ENCODE measurements at regions of chr5 and their contacts with region 1.

Region 1: DNA sequence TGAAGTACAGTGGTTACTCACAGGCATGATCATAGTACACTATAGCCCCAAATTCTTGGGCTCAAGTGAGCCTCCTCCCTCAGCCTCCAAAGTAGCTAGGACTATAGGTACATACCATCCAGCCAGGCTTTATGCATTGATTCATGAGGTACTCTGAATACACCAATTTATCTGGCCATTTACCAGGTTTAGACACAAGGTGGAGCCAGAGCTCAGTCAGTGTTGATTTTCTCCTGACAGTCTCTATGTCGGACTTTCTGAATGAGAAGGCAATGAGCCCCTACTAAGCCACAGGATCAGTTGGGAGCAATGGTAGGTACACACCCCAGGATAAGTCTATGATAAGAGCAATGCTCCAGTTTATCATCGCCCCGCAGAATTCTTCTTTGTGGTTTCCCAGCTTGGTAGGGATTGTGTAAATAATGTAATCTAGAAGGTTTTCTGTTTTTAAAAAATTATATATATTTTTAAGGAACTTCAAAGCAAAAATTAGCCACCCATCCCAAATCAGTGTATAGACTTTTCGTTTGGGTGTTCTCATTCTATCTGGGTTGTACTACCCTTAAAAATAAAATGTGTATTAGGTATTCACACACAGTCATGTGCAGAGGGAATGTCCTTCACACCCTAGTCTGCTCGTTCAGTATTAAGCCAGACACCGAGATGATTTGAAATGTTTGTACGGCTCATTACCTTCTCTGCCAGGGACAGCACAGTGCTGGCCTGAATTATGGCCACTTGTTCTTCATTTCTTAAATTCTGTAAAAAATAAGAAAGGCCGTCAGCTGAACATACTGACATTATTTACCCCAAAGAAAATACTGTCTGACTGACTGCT is 118.4 kb upstream of the DPYSL3 start:
- DNase-seq: no peak
- ATAC-seq: peak; percentile 79 to 85
- H3K4me3 ChIP-seq: no peak overlapping the region
- H3K27ac ChIP-seq: no peak overlapping the region
- H3K4me1 ChIP-seq: no peaks in the 10 kb centered on the region
- H3K27me3 ChIP-seq: no peaks in the 10 kb centered on the region

Region 2: GRCh38 chr5:147822686-147823491 is 194.6 kb after region 1 on chr5:
- intact Hi-C with region 1: loop called (anchors 2 to 5 kb)
- DNase-seq: peak in 2 of 3 donors; percentile 28 to 72
- ATAC-seq: peak; percentile 79 to 83
- H3K4me3 ChIP-seq: no peak overlapping the region
- H3K27ac ChIP-seq: no peak overlapping the region
- H3K4me1 ChIP-seq: peaks cover 1% of the 10 kb centered on the region
- H3K27me3 ChIP-seq: no peaks in the 10 kb centered on the region